Activated CD8-positive, alpha-beta T cell treated with anti-CD3 and anti-CD28 coated beads for 36 hours (primary cell): ENCODE measurements at regions of chr19 and their contacts with region 1.

Region 1: GRCh38 chr19:34428549-34429285 is 536 bp downstream of the UBA2 start:
- DNase-seq: peak; percentile 66
- ATAC-seq: peak; percentile 49
- H3K4me3 Mint-ChIP-seq: peak overlapping the region; percentile 99
- H3K27ac Mint-ChIP-seq: peak overlapping the region; percentile 97
- H3K4me1 Mint-ChIP-seq: peaks cover 32% of the 10 kb centered on the region
- H3K27me3 Mint-ChIP-seq: no peaks in the 10 kb centered on the region
- CTCF ChIP-seq: no peak

Region 2: DNA sequence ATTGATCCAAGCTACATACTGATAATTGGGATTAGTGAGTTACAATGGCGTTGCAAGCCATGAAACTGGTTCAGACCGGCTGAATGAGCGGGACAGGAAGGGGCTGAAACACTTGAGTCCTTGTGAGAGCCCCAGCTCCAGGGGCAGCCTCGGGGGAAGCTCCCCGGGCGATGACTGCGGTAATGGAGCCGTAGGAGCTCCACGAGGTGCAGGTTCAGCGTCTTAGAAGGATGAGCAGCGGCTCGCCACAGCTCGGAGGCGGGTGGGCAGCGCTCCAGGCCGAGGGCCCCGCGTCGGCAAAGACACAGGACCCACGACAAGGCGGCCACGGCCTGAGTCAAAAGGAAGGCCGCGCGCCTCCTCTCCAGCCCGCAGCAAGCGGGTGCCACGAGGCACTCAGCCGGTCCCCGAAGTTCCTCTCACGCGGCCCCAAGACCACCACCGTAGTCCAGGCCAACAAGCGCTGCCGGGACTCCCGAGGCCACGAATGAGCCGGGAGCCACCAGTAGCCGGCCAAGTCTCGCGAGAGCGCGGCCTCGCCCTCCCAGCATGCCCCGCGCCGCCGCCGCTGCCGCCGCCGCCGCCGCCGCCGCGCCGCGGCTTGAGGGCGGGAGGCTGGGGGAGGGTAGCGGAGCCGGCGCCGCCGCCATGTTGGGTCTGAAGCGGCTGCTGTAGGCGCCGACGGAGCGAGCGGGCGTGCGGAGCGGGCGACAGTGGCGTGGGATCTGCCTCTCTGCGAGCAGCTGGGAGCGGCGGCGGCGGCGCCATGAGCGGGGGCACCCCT is 256.6 kb before region 1 on chr19 and contains the start of gene LSM14A:
- CTCF ChIA-PET with region 1: no interaction called
- POLR2A ChIA-PET with region 1: no interaction called
- intact Hi-C with region 1: loop called (anchors 5 kb)
- DNase-seq: peak; percentile 92
- ATAC-seq: peak; percentile 80
- H3K4me3 Mint-ChIP-seq: peak within 1 kb of the TSS; percentile 96
- H3K27ac Mint-ChIP-seq: peak within 1 kb of the TSS; percentile 100
- H3K4me1 Mint-ChIP-seq: peaks cover 34% of the 10 kb centered on the region
- H3K27me3 Mint-ChIP-seq: no peaks in the 10 kb centered on the region
- CTCF ChIP-seq: no peak
- total RNA-seq, gene LSM14A: 98.6 to 99.3 TPM

Region 3: DNA sequence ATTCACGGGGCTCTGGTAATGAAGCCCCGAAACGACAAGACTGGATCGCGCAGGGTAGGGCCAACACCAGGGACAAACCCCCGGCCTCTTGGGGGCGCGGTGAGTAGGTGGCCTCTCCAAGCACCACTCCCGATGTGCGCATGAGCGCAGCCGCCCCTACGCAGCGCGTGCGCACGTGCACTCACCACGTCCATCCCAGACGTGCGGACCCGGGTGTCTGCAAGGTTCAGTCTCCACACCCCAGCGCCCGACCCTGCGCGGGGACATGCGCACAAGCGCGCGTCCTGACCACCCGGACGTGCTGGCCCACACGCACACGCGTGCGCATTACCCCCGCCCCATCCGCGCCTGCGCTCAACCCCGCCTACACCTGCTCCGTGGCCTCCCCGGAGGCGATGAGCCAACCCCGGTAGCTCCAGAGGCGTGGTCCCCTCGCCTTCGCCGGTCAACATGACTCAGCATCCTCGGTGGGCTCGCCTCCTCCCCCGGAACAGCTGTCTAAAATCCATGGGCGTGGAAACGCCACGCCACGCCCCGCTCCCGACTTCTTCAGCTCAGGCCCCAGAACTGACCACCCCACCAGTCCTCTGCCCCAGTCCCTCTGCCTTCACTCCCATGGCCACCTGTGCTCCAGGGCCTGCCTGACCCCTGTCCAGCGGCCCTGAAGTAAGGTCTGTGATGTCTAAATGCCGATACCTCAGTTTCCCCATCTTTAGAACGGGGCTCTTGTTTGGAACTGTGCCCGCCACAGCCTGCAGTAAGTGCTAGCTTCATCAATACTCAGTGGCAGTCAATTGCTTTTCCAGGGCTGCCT is 69.4 kb before region 1 on chr19:
- CTCF ChIA-PET with region 1: interaction called, 10 read pairs
- POLR2A ChIA-PET with region 1: interaction called, 5 read pairs
- intact Hi-C with region 1: no loop called
- DNase-seq: peak; percentile 99
- ATAC-seq: peak; percentile 93
- H3K4me3 Mint-ChIP-seq: peak overlapping the region; percentile 78
- H3K27ac Mint-ChIP-seq: peak overlapping the region; percentile 97
- H3K4me1 Mint-ChIP-seq: peaks cover 49% of the 10 kb centered on the region
- H3K27me3 Mint-ChIP-seq: no peaks in the 10 kb centered on the region
- CTCF ChIP-seq: peak; percentile 48

Region 4: DNA sequence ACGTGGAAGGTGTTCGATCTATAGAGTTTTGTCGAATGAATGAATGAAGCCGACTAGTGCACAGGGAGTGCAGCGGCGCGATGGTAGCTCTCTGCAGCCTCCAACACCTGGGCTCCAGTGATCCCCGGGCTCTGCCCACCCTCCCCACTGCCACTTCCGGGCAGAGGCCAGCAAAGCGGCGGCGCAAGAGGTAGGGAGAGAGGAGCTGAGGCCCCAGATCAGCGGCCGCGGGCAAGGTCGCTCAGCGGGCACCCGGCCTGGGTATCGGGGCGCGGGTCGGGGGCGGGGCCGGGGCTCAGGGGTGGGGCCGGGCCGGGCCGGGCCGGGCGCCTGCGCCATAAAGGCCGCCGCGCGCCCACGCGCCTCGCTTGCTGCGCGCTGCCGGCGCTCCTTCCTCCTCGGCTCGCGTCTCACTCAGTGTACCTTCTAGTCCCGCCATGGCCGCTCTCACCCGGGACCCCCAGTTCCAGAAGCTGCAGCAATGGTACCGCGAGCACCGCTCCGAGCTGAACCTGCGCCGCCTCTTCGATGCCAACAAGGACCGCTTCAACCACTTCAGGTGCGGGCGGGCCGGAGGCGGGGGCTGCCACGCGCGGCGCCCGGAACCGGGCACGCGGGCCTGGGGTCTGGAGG is 63.8 kb before region 1 on chr19 and contains the start of gene GPI:
- CTCF ChIA-PET with region 1: interaction called, 10 read pairs
- POLR2A ChIA-PET with region 1: interaction called, 10 read pairs
- intact Hi-C with region 1: no loop called
- DNase-seq: peak; percentile 77
- ATAC-seq: peak; percentile 88
- H3K4me3 Mint-ChIP-seq: peak within 1 kb of the TSS; percentile 100
- H3K27ac Mint-ChIP-seq: peak within 1 kb of the TSS; percentile 93
- H3K4me1 Mint-ChIP-seq: peaks cover 57% of the 10 kb centered on the region
- H3K27me3 Mint-ChIP-seq: no peaks in the 10 kb centered on the region
- CTCF ChIP-seq: no peak
- total RNA-seq, gene GPI: 847 to 870 TPM

Region 5: DNA sequence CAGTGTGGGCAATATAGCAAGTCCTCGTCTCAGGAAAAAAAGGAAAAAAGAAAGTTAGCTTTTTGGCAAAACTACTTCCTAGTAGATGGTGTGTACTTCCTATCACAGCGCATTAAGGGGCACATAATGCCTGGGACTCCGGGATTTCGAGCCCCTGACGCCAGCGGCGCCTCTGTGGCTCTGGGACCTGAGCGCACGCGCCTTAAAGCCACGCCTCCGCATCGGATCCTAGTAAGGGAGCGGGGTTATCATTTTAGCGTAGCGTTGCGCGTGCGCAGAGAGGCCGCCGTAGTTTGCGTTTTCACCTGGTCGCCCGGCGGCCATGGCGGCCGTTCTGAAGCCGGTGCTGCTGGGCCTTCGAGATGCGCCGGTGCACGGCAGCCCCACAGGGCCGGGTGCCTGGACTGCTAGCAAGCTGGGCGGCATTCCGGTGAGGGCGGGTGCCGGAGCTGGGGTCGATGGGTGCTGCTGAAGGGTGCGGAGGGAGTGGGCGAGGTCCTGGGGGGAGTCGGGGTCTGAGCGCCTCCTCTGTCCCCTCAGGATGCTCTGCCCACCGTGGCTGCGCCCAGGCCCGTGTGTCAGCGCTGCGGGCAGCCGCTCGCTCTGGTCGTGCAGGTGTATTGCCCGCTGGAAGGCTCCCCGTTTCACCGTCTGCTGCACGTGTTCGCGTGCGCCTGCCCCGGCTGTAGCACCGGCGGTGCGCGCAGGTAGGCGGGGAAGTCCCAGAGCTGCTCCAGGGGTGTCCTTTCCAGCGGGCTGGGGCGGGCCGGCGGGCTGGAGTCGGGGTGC is 24.4 kb before region 1 on chr19 and contains the start of gene PDCD2L:
- CTCF ChIA-PET with region 1: interaction called, 5 read pairs
- POLR2A ChIA-PET with region 1: interaction called, 16 read pairs
- intact Hi-C with region 1: no loop called
- DNase-seq: peak; percentile 98
- ATAC-seq: peak; percentile 95
- H3K4me3 Mint-ChIP-seq: peak within 1 kb of the TSS; percentile 87
- H3K27ac Mint-ChIP-seq: peak within 1 kb of the TSS; percentile 88
- H3K4me1 Mint-ChIP-seq: peaks cover 15% of the 10 kb centered on the region
- H3K27me3 Mint-ChIP-seq: no peaks in the 10 kb centered on the region
- CTCF ChIP-seq: no peak
- total RNA-seq, gene PDCD2L: 39.9 to 42.1 TPM

Region 6: GRCh38 chr19:34416021-34416545 is 12.6 kb before region 1 on chr19:
- CTCF ChIA-PET with region 1: interaction called, 12 read pairs
- POLR2A ChIA-PET with region 1: interaction called, 7 read pairs
- intact Hi-C with region 1: no loop called
- DNase-seq: no peak
- ATAC-seq: no peak
- H3K4me3 Mint-ChIP-seq: no peak overlapping the region
- H3K27ac Mint-ChIP-seq: peak overlapping the region; percentile 15
- H3K4me1 Mint-ChIP-seq: peaks cover 8% of the 10 kb centered on the region
- H3K27me3 Mint-ChIP-seq: no peaks in the 10 kb centered on the region
- CTCF ChIP-seq: no peak